Activated CD4-positive, alpha-beta T cell treated with anti-CD3 and anti-CD28 coated beads, Interleukin-2, amount 10 ng/mL, durations not matched to agents 7 days and 5 days (primary cell): ENCODE measurements at regions of chr16 and their contacts with region 1.

Region 1: GRCh38 chr16:2003827-2004641 is 5.6 kb downstream of the ZNF598 start:
- DNase-seq: peak; percentile 92
- H3K4me3 Mint-ChIP-seq: no peak overlapping the region
- H3K27ac Mint-ChIP-seq: no peak overlapping the region
- H3K4me1 Mint-ChIP-seq: peaks cover 37% of the 10 kb centered on the region
- H3K27me3 Mint-ChIP-seq: no peaks in the 10 kb centered on the region

Region 2: DNA sequence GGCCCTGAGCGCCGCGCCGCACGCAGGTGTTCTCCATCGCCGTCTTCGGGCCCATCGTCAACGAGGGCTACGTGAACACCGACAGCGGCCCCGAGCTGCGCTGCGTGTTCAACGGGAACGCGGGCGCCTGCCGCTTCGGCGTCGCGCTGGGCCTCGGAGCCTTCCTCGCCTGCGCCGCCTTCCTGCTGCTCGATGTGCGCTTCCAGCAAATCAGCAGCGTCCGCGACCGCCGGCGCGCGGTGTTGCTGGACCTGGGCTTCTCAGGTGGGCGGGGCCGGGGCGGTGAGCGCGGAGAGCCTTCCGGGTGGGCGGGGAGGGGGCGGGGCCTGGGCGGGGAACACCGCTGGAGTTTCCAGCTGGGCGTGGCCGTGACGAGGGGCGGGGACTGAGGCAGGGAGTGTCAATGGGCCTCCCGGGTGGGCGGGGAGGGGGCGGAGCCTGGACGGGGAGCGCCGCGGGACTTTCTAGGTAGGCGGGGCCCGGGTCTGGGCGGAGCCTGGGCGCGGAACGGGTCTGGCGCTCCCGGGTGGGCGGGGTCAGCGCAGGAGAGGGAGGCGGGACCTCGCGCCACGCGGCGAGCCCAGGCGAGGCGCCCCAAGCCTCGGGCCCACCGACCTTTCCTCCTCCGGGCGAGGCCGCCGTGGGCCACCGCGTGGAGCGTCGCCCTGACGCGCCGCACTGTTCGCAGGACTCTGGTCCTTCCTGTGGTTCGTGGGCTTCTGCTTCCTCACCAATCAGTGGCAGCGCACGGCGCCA is 11.9 kb before region 1 on chr16:
- CTCF ChIA-PET with region 1: interaction called, 36 read pairs
- POLR2A ChIA-PET with region 1: no interaction called
- DNase-seq: peak; percentile 98
- H3K4me3 Mint-ChIP-seq: peak overlapping the region; percentile 40
- H3K27ac Mint-ChIP-seq: peak overlapping the region; percentile 13
- H3K4me1 Mint-ChIP-seq: peaks cover 26% of the 10 kb centered on the region
- H3K27me3 Mint-ChIP-seq: peaks cover 21% of the 10 kb centered on the region

Region 3: GRCh38 chr16:2023098-2023925 is 19.3 kb after region 1 on chr16:
- CTCF ChIA-PET with region 1: interaction called, 11 read pairs
- POLR2A ChIA-PET with region 1: no interaction called
- DNase-seq: peak; percentile 94
- H3K4me3 Mint-ChIP-seq: peak overlapping the region; percentile 55
- H3K27ac Mint-ChIP-seq: peak overlapping the region; percentile 67
- H3K4me1 Mint-ChIP-seq: peaks cover 28% of the 10 kb centered on the region
- H3K27me3 Mint-ChIP-seq: peaks cover 44% of the 10 kb centered on the region